RWPE1 (cell line): ENCODE measurements at regions of chr19 and their contacts with region 1.

Region 1: DNA sequence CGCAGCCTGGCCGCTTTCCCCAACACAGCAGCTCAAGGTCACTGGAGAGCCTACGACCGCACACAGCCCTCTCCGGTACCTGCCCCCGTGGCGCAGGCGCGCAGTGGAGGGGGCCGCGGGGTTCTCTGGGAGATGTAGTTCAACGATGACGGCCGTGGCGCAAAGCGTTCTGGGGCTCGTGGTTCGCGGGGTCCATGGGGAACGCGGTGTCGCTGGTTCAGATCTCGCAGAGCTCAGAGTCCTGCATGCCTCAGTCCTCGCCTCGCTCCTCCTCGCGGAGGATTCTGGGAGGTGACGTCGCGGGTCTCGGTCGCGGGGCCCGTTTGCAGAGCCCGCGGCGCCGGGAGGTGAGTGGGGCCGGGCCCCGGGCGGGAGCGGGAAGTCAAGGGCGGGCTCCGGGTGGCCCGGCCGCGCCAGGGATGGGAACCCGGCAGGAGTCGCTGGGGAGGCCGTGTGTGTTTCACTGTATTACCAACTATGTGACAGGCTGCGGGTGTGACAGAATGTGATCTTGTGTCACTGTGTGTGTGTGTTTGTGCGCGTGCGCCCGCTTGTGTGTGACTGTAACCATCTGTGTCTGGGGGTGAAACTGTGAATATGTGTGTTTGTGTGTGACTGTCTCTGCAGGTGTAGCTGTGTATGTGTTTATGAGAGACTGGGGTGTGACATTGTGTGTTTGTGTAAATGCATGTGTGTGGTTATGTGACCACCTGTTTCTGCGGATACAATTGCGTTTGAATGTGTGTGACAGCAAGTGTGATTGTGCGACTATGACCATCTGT is at the start of gene ZNF527:
- DNase-seq: peak; percentile 92
- H3K27ac ChIP-seq: peak within 1 kb of the TSS; percentile 87
- CTCF ChIP-seq: no peak

Region 2: DNA sequence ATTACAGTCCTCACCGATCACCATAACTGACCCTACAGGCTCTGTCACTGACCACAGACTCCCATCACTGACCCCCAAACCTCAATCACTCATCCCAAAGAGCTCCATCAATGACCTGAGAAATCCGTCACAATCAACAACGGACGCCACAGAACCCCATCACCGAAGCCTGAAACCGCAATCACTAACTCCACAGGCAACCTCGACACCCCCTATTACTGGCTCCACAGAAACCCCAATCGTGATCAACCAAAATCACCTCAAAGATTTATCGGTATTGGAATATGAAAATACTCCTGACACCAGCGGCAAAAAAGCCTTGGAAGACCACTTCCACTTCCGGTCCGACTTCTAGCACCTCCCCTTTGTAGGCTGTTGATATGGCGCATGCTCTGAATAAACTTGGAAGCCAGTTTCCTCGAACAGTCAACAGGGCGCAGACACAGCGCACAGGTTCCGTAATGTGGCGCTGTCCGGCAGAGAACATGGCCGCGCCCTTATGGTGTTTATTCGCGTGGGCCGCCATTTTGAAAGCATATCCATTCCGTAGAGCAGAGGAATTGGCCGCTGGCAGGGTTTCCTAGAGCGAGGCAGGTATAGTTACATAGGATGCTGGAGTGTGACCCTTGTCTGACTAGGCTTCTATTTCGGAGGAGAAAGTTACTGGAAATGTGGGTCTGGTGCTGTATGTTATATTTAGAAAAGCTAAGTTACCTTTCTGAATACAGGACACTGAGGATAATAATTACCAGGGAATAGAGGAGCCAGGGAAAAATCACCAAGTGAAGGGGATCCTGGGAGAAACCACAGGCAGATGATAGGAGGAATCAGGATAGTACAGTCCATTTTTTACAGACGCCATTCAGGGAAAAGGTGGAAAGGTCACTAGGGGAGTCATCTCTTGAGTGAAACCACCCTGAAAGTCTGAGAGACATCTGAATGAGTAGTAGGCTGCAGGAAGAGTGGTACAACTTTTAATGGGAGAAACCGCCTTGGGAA is 198.4 kb before region 1 on chr19 and contains the start of gene ZNF585A:
- CTCF ChIA-PET with region 1: no interaction called
- POLR2A ChIA-PET with region 1: no interaction called
- DNase-seq: peak; percentile 78
- H3K27ac ChIP-seq: peak within 1 kb of the TSS; percentile 55
- CTCF ChIP-seq: no peak

Region 3: GRCh38 chr19:37484406-37485115 is 113.5 kb after region 1 on chr19:
- CTCF ChIA-PET with region 1: no interaction called
- POLR2A ChIA-PET with region 1: interaction called, 12 read pairs
- DNase-seq: no peak
- H3K27ac ChIP-seq: no peak overlapping the region
- CTCF ChIP-seq: no peak

Region 4: DNA sequence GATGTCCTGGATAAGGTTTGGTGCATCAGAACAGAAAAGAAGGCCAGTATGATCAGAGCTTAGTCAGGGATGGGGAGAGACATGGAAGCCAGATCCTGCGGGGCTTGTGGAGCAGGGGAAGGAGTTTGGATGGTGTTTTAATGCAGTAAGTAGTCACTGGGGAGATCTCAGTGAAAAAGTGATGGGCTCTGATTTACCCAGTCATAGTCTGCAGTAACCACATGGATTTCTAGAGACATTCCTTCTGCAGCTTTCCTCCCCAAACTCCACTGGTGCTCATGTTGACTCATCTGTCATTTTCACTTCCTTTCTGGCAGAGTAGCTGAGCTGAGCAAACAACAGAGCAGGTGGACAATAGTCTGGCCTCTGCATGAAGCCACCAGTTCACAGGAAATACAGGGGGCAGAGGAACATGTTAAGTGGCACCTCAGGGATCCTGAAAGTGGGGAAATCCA is 708.9 kb after region 1 on chr19:
- CTCF ChIA-PET with region 1: no interaction called
- POLR2A ChIA-PET with region 1: interaction called, 11 read pairs
- DNase-seq: peak; percentile 46
- H3K27ac ChIP-seq: peak overlapping the region; percentile 54
- CTCF ChIP-seq: no peak